ENCODE measurements at regions of chr6 and their contacts with region 1.

Region 1: GRCh38 chr6:36780442-36781177 is 58.6 kb downstream of the CPNE5 start:
- DNase-seq: peak in 1 of 35 experiments; percentile 14
- ATAC-seq: no peak
- H3K4me3 ChIP-seq: no peak overlapping the region
- H3K4me3 Mint-ChIP-seq: no peak overlapping the region
- H3K27ac ChIP-seq: no peak overlapping the region
- H3K27ac Mint-ChIP-seq: no peak overlapping the region
- H3K4me1 ChIP-seq: peaks cover 0 to 8% of the 10 kb centered on the region in 2 experiments
- H3K4me1 Mint-ChIP-seq: peaks cover 0 to 10% (median 6%) of the 10 kb centered on the region in 3 donors
- H3K27me3 ChIP-seq: peaks cover 0 to 11% of the 10 kb centered on the region in 2 experiments
- H3K27me3 Mint-ChIP-seq: no peaks in the 10 kb centered on the region

Region 2: DNA sequence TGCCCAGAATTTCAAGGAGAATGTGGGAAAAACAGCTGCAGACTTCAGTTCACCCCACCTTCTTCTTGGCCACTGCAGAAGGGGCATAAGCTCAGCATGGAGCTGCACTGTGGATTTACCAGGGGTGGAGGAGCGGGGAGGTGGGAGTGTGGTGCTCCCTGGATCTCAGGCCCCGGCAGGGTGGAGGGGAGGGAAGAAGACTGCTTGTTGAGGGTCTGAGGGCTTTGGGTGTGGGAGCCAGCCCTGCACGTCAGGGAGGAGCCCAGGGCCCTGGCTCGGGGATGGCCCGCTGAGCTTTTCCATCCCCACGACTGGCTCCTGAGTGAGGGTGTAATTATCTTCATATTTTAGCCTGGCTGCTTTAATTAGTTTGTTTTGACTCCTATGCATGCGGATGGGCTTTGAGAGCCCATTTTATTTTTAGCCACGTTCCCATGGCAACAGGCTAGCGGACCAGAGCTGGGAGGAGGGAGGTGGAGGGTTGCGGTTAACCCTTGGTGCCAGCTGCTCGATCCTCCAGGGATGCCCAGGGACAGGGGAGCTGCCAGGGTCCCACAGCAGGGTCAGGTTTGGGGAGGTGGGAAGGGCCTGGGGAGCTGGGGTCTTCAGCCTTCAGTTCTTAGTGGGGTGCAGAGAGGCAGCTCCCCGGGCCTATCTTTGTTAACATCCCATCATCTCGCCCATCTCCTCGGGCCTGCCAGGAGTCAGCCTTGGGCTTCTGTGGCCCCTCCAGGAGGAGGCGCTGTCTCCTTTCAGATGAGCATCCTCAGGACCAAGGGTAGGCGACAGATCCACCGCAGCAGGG is 14.8 kb before region 1 on chr6:
- CTCF ChIA-PET with region 1: interaction called, 10 to 24 read pairs
- POLR2A ChIA-PET with region 1: interaction called in 1 of 2 experiments, 3 read pairs
- DNase-seq: peak; percentile 55 to 88 (median 76)
- ATAC-seq: peak; percentile 76 to 94 (median 76)
- H3K4me3 ChIP-seq: no peak overlapping the region
- H3K4me3 Mint-ChIP-seq: no peak overlapping the region
- H3K27ac ChIP-seq: no peak overlapping the region
- H3K27ac Mint-ChIP-seq: peak overlapping the region in 1 of 2 donors; percentile 31
- H3K4me1 ChIP-seq: peaks cover 18 to 46% of the 10 kb centered on the region in 2 experiments
- H3K4me1 Mint-ChIP-seq: peaks cover 32 to 42% (median 37%) of the 10 kb centered on the region in 3 donors
- H3K27me3 ChIP-seq: no peaks in the 10 kb centered on the region
- H3K27me3 Mint-ChIP-seq: no peaks in the 10 kb centered on the region

Region 3: DNA sequence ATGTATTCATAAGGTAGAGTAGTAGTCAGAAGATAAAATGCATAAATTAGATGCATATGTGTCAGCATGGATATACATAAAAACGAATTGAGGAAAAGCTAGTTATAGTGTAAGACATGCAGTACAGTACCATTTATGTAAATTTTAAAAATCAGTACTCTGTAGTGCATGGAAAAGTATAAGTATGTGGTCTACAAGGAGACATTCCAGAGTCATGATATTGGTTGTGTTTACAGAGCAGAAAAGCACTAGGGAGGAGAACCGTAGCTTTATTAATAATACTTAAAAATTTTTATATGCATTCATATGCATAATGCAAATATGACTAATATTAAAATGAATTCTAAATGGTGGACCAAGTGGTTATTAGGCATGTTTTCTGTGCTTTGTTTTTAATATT is 1258.9 kb after region 1 on chr6:
- CTCF ChIA-PET with region 1: no interaction called
- POLR2A ChIA-PET with region 1: no interaction called
- DNase-seq: no peak
- ATAC-seq: no peak
- H3K4me3 ChIP-seq: no peak overlapping the region
- H3K4me3 Mint-ChIP-seq: no peak overlapping the region
- H3K27ac ChIP-seq: no peak overlapping the region
- H3K27ac Mint-ChIP-seq: no peak overlapping the region
- H3K4me1 ChIP-seq: peaks cover 0 to 5% of the 10 kb centered on the region in 2 experiments
- H3K4me1 Mint-ChIP-seq: peaks cover 43 to 58% (median 49%) of the 10 kb centered on the region in 3 donors
- H3K27me3 ChIP-seq: no peaks in the 10 kb centered on the region
- H3K27me3 Mint-ChIP-seq: no peaks in the 10 kb centered on the region